Prostate gland (tissue), 2 donors: ENCODE measurements at regions of chr22 and their contacts with region 1.

Region 1: GRCh38 chr22:17785185-17786184 is 11.2 kb upstream of the BID start:
- DNase-seq: peak; percentile 34
- H3K4me3 ChIP-seq: no peak overlapping the region
- H3K27ac ChIP-seq: no peak overlapping the region
- H3K4me1 ChIP-seq: no peaks in the 10 kb centered on the region
- H3K27me3 ChIP-seq: no peaks in the 10 kb centered on the region
- CTCF ChIP-seq: peak in 3 of 4 experiments; percentile 37 to 61 (median 44)
- POLR2A ChIP-seq: no peak

Region 2: DNA sequence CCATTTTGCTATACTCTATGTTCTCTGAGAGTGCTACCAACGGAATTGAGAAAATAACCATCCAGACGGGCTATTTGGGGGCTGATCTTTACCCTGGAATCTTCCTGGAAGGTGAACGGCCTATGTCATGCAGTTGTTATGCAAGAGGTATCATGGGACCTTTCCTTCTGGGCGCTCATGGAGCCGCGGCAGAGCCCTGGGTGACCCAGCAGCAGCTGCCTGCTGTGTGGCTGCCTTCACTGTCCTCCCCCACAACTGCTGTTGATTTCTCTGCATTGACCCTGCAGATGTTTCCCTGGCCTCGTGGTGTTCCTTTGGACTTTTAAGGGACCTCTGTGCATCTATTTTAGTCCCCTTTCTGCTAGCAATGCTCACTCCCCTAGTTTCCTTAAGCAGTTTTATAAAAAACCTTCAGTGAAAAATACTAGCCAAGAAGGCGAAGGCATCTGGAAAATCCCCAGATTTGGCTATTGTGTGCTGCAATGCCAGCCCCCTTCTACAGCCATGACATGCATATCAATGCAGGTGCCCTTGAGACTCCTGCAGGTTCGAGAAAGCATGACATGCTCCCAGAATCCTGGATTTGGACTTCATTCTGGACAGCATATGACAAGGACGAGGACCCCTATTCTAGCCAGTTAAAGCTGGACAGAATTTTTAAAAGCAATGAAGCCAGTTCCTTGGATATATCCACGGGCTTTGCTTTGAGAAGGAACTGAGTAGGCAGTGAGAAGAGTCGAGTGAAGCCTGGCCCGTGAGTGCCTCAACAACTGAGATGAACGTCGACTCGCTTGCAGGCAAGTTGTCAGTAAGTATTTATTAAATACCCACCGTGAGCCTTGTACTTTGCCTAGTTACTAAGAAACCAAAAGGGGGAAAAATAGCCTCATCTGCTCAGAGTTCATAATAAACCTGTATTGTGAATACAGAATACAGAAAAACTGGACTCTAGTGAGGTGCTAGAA is 222.3 kb before region 1 on chr22 and contains the start of gene SLC25A18:
- intact Hi-C with region 1: loop called (anchors 10 kb)
- DNase-seq: no peak
- H3K4me3 ChIP-seq: no peak within 1 kb of the TSS
- H3K27ac ChIP-seq: peak within 1 kb of the TSS; percentile 45 to 60
- H3K4me1 ChIP-seq: no peaks in the 10 kb centered on the region
- H3K27me3 ChIP-seq: no peaks in the 10 kb centered on the region
- CTCF ChIP-seq: no peak
- POLR2A ChIP-seq: no peak
- total RNA-seq, gene SLC25A18: 9.0 to 10.6 TPM